PC-9 (cell line): ENCODE measurements at regions of chr3 and their contacts with region 1.

Region 1: DNA sequence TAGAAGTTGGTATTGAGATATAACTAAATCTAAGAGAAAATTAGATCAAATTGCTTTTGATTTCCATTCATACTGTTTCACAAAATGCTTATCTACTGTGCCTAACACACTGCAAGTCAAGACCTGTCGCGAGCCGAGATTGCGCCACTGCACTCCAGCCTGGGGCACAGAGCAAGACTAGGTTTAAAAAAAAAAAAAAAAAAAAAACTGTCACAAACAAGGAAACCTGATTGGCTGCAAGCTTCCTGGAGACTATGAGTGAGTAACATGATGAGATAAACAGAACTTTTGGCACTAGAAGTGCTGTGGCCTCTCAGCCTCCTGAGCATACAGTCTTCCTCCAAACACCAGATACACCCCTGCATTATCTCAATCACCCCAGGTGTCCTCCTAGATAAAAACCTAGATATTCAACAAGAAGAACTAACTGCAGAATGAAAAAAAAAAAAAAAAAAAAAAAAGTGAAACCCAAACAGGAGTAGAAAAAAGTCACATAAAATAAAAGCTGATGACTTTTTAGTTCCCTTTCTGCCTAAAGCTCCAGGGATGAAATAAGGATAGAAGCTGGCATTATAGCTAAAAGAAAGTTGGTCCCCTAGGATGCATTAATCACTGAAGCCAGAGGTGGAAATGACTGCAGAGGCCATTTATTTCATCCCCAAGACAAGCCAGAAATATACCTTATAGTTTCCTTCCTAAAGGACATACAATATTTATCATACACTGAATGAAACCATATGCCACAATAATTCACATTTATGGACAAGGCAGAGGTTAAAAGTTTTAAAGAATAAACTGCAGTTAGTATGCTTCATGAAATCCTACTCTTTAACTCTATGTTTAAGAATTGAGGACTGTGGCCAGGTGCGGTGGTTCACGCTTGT is 82.4 kb downstream of the P3H2 start:
- DNase-seq: peak in 1 of 2 experiments; percentile 82
- H3K4me3 ChIP-seq: no peak overlapping the region
- H3K27ac ChIP-seq: no peak overlapping the region
- H3K4me1 ChIP-seq: no peaks in the 10 kb centered on the region
- H3K27me3 ChIP-seq: no peaks in the 10 kb centered on the region
- CTCF ChIP-seq: no peak

Region 2: DNA sequence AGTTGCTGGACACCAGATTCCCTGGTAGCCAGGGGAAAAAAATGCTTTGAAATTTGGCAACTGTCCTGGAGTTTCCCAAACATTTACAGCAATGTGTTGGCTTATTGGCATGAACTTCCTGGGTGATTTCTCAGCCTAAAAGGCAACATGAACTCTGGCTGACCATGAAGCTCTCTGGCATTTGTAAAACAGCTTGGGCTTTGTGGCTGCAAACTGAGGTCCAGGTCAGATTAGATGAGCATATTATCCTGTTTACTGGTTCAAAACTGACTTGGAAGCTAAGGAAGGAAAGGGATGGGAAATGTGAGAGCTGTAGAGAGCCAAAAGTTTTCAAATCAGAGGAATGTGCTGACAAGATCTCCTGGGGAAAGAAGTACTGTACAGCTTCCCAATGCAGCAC is 56.6 kb before region 1 on chr3:
- CTCF ChIA-PET with region 1: interaction called, 11 read pairs
- POLR2A ChIA-PET with region 1: no interaction called
- intact Hi-C with region 1: no loop called
- DNase-seq: peak; percentile 51 to 61
- H3K4me3 ChIP-seq: no peak overlapping the region
- H3K27ac ChIP-seq: 0 out of 2 replicates have a peak overlapping the region, but pooled peaks have one; percentile 4
- H3K4me1 ChIP-seq: peaks cover 12% of the 10 kb centered on the region
- H3K27me3 ChIP-seq: no peaks in the 10 kb centered on the region
- CTCF ChIP-seq: no peak